HepG2 (cell line): ENCODE measurements at regions of chr19 and their contacts with region 1.

Region 1: DNA sequence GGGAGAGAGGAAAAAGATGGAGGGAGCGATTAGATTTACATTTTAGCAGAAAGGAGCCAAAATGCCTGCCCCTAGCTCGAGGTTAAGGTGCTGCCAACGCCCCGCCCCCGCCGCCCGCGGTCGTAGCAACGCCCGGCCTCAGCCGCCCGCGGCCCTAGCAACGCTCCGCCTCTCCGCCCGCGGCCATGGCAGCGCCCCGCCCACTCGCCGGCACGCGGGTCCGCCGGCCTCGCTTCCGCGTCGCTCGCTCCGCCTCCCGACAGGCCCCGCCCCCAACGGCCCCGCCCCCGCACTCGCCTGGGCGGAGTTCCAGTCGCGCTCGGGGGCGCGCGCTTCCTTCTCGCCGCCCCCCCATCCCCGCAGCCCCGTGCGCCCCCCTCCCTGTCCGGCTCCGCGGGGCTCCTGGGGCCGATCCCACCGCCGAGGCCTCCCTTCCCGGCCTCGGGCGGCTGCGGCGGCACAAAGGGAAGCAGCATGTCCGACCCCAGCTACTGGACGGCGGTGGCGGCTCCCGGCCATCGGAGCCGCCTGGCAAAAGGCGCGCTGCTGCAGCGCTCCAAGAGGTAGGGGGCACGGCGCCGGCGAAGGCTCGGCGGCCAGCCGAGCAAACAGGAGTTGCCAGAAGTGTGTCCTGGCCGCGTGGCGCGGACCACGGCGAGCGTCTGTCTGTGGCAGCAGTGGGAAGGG is 20.3 kb downstream of the MAST3 start:
- DNase-seq: peak; percentile 71
- ATAC-seq: peak; percentile 83
- H3K4me3 ChIP-seq: peak overlapping the region; percentile 72 to 91 (median 73)
- H3K27ac ChIP-seq: peak overlapping the region; percentile 63
- H3K4me1 ChIP-seq: peaks cover 23% of the 10 kb centered on the region
- H3K27me3 ChIP-seq: no peaks in the 10 kb centered on the region
- CTCF ChIP-seq: no peak; the same call in 1 of the 2 replicates
- EP300 ChIP-seq: no peak
- POLR2A ChIP-seq: peak in 1 of 2 experiments; percentile 20; a peak in 2 of 4 replicates
- RAD21 ChIP-seq: peak; percentile 31; the same call in 1 of the 2 replicates

Region 2: DNA sequence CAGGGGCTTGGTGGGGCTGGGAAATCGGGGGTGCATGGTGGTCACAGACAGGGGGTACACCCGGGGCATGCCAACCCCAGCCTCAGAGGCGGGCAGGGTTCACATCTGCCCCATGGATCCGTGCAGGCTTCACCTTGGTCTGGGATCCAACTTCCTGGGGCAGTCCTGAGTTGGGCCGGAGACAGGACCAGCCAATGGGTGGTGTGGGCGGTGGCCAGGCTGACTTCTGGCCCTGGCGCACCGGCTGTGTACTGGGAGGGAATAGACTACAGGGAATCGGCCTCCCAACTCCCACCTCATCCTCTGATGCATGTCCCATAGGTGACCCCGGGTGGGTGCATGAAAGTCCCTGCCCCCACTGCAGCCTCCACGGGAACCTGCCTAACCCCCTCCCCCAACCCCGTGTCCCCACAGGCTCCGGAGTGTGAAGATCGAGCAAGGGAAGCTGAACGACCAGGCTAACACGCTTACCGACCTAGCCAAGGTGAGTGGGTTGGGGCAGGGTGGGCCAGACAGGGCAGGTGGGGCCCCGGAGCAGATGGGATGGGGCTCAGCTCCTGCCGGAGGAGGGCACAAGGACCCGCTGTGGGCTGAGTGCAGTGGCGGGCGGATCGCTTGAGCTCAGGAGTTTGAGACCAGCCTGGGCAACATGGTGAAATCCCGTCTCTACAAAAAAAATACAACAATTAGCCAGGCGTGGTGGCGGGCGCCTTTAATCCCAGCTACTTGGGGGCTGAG is 124.6 kb before region 1 on chr19:
- CTCF ChIA-PET with region 1: no interaction called
- POLR2A ChIA-PET with region 1: no interaction called
- in situ Hi-C with region 1: no loop called
- intact Hi-C with region 1: no loop called
- DNase-seq: no peak
- ATAC-seq: peak; percentile 12; the same call in 1 of the 3 replicates
- H3K4me3 ChIP-seq: no peak overlapping the region
- H3K27ac ChIP-seq: no peak overlapping the region
- H3K4me1 ChIP-seq: peaks cover 22% of the 10 kb centered on the region
- H3K27me3 ChIP-seq: peaks cover 0 to 2% of the 10 kb centered on the region in 2 experiments; a peak in 1 of 5 replicates
- CTCF ChIP-seq: no peak
- EP300 ChIP-seq: no peak
- POLR2A ChIP-seq: no peak
- RAD21 ChIP-seq: no peak

Region 3: DNA sequence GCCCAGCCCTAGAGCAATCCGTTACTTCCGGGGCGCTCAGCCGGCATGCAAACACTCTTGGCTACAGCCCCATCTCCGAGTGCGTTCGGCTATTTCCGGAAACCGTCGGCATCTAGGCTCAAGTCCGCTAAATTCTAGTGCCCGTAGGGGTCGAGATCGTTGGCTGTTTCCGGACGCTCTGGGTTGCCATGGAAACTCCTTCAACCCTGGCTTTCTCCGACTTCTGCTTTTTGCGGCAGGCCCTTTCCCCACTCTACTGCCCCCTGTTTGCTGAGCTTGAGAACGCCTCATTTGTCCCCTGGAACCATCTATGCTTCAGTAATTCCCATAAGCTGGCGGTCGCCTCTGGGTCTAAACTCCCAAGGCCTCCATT is 34.6 kb after region 1 on chr19:
- CTCF ChIA-PET with region 1: interaction called, 3 read pairs
- POLR2A ChIA-PET with region 1: interaction called, 18 read pairs
- in situ Hi-C with region 1: loop called (anchors 5 kb)
- intact Hi-C with region 1: loop called (anchors 1 kb)
- DNase-seq: peak; percentile 98
- ATAC-seq: peak; percentile 75
- H3K4me3 ChIP-seq: peak overlapping the region; percentile 47 to 98 (median 66); a peak in 5 of 6 replicates
- H3K27ac ChIP-seq: peak overlapping the region; percentile 94
- H3K4me1 ChIP-seq: peaks cover 53% of the 10 kb centered on the region
- H3K27me3 ChIP-seq: no peaks in the 10 kb centered on the region; a peak in 1 of 5 replicates
- CTCF ChIP-seq: peak; percentile 78
- EP300 ChIP-seq: no peak; a peak in 1 of 4 replicates
- POLR2A ChIP-seq: no peak
- RAD21 ChIP-seq: peak; percentile 66

Region 4: GRCh38 chr19:18160971-18161635 is 43.3 kb after region 1 on chr19:
- CTCF ChIA-PET with region 1: interaction called, 25 read pairs
- POLR2A ChIA-PET with region 1: interaction called, 8 read pairs
- in situ Hi-C with region 1: no loop called
- intact Hi-C with region 1: no loop called
- DNase-seq: peak; percentile 43
- ATAC-seq: peak; percentile 88
- H3K4me3 ChIP-seq: no peak overlapping the region; a peak in 1 of 6 replicates
- H3K27ac ChIP-seq: no peak overlapping the region
- H3K4me1 ChIP-seq: peaks cover 27% of the 10 kb centered on the region
- H3K27me3 ChIP-seq: no peaks in the 10 kb centered on the region
- CTCF ChIP-seq: peak; percentile 59; the same call in 1 of the 2 replicates
- EP300 ChIP-seq: no peak
- POLR2A ChIP-seq: no peak
- RAD21 ChIP-seq: peak; percentile 63

Region 5: DNA sequence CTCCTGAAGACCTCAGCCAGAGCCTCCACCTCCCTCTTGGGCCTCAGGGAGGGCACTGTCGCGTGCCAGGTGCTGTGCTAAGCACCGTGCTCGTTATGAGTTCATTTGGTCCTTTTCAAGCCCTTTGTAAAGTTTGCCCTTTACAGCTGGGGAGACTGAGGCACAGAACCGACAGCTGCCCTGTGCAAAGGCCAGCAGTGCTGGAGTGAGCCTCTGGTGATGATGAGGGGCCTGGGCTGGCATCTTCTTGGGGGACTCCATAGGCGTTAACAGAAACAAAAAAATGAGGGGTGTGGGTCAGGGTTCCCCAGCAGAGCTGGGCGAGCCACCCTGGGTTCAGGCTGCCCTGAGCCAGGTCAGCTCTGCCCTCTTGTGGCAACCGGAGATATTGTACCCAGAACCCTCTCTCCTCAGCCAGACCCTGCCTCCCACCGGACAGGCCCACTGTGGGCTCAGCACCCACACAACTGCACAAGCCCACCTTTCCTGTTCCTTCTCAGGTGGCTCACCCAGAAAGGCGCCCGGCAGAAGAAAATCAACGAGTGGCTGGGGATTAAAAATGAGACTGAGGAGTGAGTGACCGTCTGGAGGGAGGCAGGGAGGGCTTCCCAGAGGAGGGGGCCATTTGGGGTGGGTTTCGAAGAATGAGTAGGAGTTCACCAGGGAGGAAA is 50.3 kb after region 1 on chr19:
- CTCF ChIA-PET with region 1: interaction called, 25 read pairs
- POLR2A ChIA-PET with region 1: interaction called, 8 read pairs
- in situ Hi-C with region 1: no loop called
- intact Hi-C with region 1: loop called (anchors 1 kb)
- DNase-seq: no peak
- ATAC-seq: peak; percentile 86
- H3K4me3 ChIP-seq: no peak overlapping the region
- H3K27ac ChIP-seq: no peak overlapping the region
- H3K4me1 ChIP-seq: no peaks in the 10 kb centered on the region
- H3K27me3 ChIP-seq: no peaks in the 10 kb centered on the region
- CTCF ChIP-seq: peak; percentile 80
- EP300 ChIP-seq: no peak
- POLR2A ChIP-seq: no peak
- RAD21 ChIP-seq: peak; percentile 78

Region 6: DNA sequence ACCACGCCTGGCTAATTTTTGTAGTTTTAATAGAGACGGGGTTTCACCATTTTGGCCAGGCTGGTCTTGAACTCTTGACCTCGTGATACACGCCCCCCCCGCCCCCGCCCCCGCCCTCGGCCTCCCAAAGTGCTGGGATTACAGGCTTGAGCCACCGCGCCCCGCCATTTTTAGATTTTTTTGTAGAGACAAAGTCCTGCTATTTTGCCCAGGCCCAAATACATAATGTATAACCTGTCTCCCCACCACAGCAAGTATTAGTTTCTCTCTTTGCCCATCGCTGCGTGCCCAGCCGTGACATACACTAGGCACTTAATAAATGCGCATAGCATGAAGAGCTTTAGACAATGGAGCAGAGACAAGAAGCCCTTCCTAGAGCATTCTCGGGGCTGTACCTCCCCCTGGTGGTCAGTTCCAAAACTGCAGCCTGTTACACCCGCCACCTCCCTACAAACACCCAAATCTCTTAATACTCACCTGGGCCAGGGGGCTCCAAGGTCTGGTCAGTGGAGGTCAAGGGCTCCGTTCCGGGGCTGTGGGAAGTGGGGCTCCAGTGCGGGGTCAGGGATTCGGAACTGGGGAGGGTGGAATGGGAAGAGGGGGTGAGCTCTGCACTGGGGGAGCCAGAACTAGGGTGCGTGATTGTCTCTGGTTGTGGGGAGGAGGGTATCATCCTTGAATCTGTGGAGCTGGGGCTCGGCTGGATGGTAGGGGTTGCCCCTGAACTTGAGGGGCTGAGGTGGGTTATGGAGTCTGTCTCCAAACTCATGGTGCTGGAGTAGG is 133.9 kb after region 1 on chr19:
- CTCF ChIA-PET with region 1: interaction called, 5 read pairs
- POLR2A ChIA-PET with region 1: no interaction called
- in situ Hi-C with region 1: no loop called
- intact Hi-C with region 1: loop called (anchors 1 kb)
- DNase-seq: peak; percentile 56
- ATAC-seq: peak; percentile 65
- H3K4me3 ChIP-seq: no peak overlapping the region
- H3K27ac ChIP-seq: no peak overlapping the region
- H3K4me1 ChIP-seq: peaks cover 21% of the 10 kb centered on the region
- H3K27me3 ChIP-seq: peaks cover 0 to 15% of the 10 kb centered on the region in 2 experiments; a peak in 3 of 5 replicates
- CTCF ChIP-seq: peak; percentile 92
- EP300 ChIP-seq: no peak
- POLR2A ChIP-seq: no peak
- RAD21 ChIP-seq: peak; percentile 91